ENCODE measurements at regions of chr19 and their contacts with region 1.

Region 1: GRCh38 chr19:46840136-46840942 is 10.3 kb downstream of the AP2S1 start:
- DNase-seq: peak; percentile 57 to 90
- H3K4me3 ChIP-seq: no peak overlapping the region
- H3K27ac ChIP-seq: peak overlapping the region in 4 of 5 donors; percentile 45 to 79 (median 67)
- H3K4me1 ChIP-seq: peaks cover 7 to 43% (median 27%) of the 10 kb centered on the region in 4 donors
- H3K27me3 ChIP-seq: no peaks in the 10 kb centered on the region
- CTCF ChIP-seq: peak in 5 of 7 experiments; percentile 76 to 88 (median 77)
- EP300 ChIP-seq: no peak
- POLR2A ChIP-seq: no peak

Region 2: GRCh38 chr19:46704379-46705076 is 135.8 kb before region 1 on chr19:
- intact Hi-C with region 1: no loop called
- DNase-seq: peak; percentile 80 to 85
- H3K4me3 ChIP-seq: no peak overlapping the region
- H3K27ac ChIP-seq: no peak overlapping the region
- H3K4me1 ChIP-seq: no peaks in the 10 kb centered on the region
- H3K27me3 ChIP-seq: no peaks in the 10 kb centered on the region
- CTCF ChIP-seq: peak in 5 of 7 experiments; percentile 58 to 97 (median 97)
- EP300 ChIP-seq: no peak
- POLR2A ChIP-seq: no peak

Region 3: GRCh38 chr19:46759817-46760333 is 80.5 kb before region 1 on chr19:
- intact Hi-C with region 1: loop called (anchors 5 kb)
- DNase-seq: peak in 1 of 2 donors; percentile 52
- H3K4me3 ChIP-seq: no peak overlapping the region
- H3K27ac ChIP-seq: peak overlapping the region in 4 of 5 donors; percentile 45 to 74 (median 60)
- H3K4me1 ChIP-seq: peaks cover 0 to 48% (median 14%) of the 10 kb centered on the region in 4 donors
- H3K27me3 ChIP-seq: no peaks in the 10 kb centered on the region
- CTCF ChIP-seq: no peak
- EP300 ChIP-seq: peak; percentile 14
- POLR2A ChIP-seq: no peak